Left ventricle myocardium inferior (tissue), 1 donor: ENCODE measurements at regions of chr2 and their contacts with region 1.

Region 1: GRCh38 chr2:69724540-69725159 is 17.3 kb upstream of the ANXA4 start:
- DNase-seq: peak; percentile 79
- H3K4me3 ChIP-seq: peak overlapping the region; percentile 56
- H3K27ac ChIP-seq: no peak overlapping the region
- H3K4me1 ChIP-seq: peaks cover 12% of the 10 kb centered on the region
- H3K27me3 ChIP-seq: no peaks in the 10 kb centered on the region
- CTCF ChIP-seq: peak; percentile 96

Region 2: GRCh38 chr2:69816923-69817542 is 92.4 kb after region 1 on chr2:
- intact Hi-C with region 1: loop called (anchors 2 kb)
- DNase-seq: peak; percentile 20
- H3K4me3 ChIP-seq: no peak overlapping the region
- H3K27ac ChIP-seq: no peak overlapping the region
- H3K4me1 ChIP-seq: peaks cover 19% of the 10 kb centered on the region
- H3K27me3 ChIP-seq: no peaks in the 10 kb centered on the region
- CTCF ChIP-seq: peak; percentile 96